ENCODE measurements at regions of chr6 and their contacts with region 1.

Region 1: GRCh38 chr6:158669145-158670035 is 19.5 kb downstream of the SYTL3 start:
- DNase-seq: no peak
- H3K4me3 ChIP-seq: no peak overlapping the region
- H3K27ac ChIP-seq: no peak overlapping the region
- H3K4me1 ChIP-seq: peaks cover 0 to 5% (median 0%) of the 10 kb centered on the region in 4 donors
- H3K27me3 ChIP-seq: no peaks in the 10 kb centered on the region
- CTCF ChIP-seq: no peak

Region 2: DNA sequence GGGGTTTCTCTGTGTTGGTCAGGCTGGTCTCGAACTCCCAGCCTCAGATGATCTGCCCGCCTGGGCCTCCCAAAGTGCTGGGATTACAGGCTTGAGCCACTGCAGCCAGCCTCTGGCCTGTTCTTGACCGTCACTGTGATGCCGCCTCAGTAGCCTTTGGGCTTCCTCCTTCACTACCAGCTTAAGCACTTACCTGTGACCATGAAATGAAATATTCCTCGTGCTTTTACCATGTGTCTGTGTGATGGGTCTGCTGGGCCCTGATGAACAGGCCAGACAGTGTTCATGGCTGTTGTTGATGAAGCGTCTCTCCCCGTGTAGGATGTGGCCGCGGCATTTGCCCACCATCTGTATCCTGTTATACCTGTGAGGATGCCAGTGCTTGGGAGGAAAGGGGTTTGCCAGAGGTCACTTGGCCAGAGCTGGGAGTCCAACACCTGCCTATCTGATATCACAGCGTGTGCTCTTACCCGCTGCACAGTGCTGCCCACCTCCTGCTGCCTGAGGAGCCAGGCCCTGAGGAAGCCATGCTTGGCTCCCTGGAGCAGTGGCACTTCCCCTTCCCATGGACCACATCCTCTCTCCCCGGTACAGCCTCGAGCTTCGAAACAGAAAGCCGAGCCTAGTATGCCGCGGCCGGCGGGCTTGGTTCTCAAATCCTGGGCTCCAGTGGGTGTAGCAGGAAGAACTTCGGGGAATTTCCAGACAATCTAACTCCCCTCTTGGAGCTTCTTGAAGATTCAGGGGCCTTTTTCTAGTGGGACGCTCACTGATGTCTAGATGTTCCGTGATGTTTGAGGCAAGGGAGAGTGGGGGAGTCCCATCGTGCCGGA is 1120.5 kb before region 1 on chr6:
- intact Hi-C with region 1: loop called (anchors 10 kb)
- DNase-seq: no peak
- H3K4me3 ChIP-seq: no peak overlapping the region
- H3K27ac ChIP-seq: no peak overlapping the region
- H3K4me1 ChIP-seq: no peaks in the 10 kb centered on the region
- H3K27me3 ChIP-seq: no peaks in the 10 kb centered on the region
- CTCF ChIP-seq: no peak